ENCODE measurements at regions of chr2 and their contacts with region 1.

Region 1: GRCh38 chr2:85999061-85999831 is 106.4 kb downstream of the POLR1A start:
- DNase-seq: no peak
- ATAC-seq: peak; percentile 73
- H3K4me3 Mint-ChIP-seq: peak overlapping the region; percentile 66
- H3K27ac Mint-ChIP-seq: peak overlapping the region; percentile 96
- H3K4me1 Mint-ChIP-seq: peaks cover 76% of the 10 kb centered on the region
- H3K27me3 Mint-ChIP-seq: no peaks in the 10 kb centered on the region
- CTCF ChIP-seq: no peak

Region 2: DNA sequence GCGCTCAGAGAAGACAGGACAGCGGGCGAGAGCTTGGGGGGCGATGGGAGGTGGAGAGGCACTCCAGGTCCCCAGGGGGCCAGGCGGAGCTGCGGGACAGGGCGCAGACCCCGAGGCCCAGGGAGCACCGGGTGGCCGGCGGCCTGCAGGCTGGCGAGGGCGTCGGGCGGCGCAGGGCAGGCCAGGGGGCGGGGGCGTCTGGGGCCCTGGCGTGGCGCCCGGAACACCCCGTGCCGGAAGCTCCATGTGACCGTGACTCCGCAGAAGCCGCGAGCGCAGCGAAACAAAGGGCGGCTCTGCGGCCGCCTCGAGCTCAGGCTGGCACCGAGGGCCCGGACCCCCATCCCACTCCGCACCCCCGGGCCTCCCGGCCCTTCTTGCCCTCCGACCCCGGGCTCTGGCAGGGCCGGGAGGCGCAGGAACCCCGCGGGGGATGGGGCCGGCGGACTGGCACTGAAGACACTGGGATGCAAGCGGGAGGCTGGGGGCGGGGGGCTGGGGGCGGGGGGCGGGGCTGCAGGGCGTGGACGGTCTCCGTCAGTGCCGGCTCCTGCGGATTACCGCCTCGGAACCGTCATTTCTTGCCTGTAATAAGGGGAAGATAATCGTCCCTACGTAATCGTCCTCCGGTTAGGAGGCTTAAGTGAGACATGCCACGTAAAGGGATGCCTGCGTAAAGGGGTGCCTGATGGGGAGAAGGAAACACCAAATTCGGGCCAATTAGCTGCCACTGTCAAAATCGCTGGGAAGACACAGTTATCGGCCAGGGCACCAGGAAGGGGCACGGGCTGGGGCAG is 561.6 kb before region 1 on chr2:
- CTCF ChIA-PET with region 1: no interaction called
- POLR2A ChIA-PET with region 1: no interaction called
- intact Hi-C with region 1: no loop called
- DNase-seq: peak; percentile 80
- ATAC-seq: peak; percentile 86
- H3K4me3 Mint-ChIP-seq: peak overlapping the region; percentile 87
- H3K27ac Mint-ChIP-seq: peak overlapping the region; percentile 95
- H3K4me1 Mint-ChIP-seq: peaks cover 33% of the 10 kb centered on the region
- H3K27me3 Mint-ChIP-seq: no peaks in the 10 kb centered on the region
- CTCF ChIP-seq: no peak

Region 3: GRCh38 chr2:85852937-85853498 is 146.2 kb before region 1 on chr2:
- CTCF ChIA-PET with region 1: no interaction called
- POLR2A ChIA-PET with region 1: interaction called, 6 read pairs
- intact Hi-C with region 1: loop called (anchors 2 kb)
- DNase-seq: peak; percentile 29
- ATAC-seq: peak; percentile 76
- H3K4me3 Mint-ChIP-seq: peak overlapping the region; percentile 79
- H3K27ac Mint-ChIP-seq: peak overlapping the region; percentile 99
- H3K4me1 Mint-ChIP-seq: peaks cover 79% of the 10 kb centered on the region
- H3K27me3 Mint-ChIP-seq: no peaks in the 10 kb centered on the region
- CTCF ChIP-seq: no peak

Region 4: GRCh38 chr2:85976106-85976920 is 22.9 kb before region 1 on chr2:
- CTCF ChIA-PET with region 1: no interaction called
- POLR2A ChIA-PET with region 1: interaction called, 3 read pairs
- intact Hi-C with region 1: loop called (anchors 2 kb)
- DNase-seq: no peak
- ATAC-seq: no peak
- H3K4me3 Mint-ChIP-seq: no peak overlapping the region
- H3K27ac Mint-ChIP-seq: no peak overlapping the region
- H3K4me1 Mint-ChIP-seq: peaks cover 21% of the 10 kb centered on the region
- H3K27me3 Mint-ChIP-seq: no peaks in the 10 kb centered on the region
- CTCF ChIP-seq: no peak

Region 5: DNA sequence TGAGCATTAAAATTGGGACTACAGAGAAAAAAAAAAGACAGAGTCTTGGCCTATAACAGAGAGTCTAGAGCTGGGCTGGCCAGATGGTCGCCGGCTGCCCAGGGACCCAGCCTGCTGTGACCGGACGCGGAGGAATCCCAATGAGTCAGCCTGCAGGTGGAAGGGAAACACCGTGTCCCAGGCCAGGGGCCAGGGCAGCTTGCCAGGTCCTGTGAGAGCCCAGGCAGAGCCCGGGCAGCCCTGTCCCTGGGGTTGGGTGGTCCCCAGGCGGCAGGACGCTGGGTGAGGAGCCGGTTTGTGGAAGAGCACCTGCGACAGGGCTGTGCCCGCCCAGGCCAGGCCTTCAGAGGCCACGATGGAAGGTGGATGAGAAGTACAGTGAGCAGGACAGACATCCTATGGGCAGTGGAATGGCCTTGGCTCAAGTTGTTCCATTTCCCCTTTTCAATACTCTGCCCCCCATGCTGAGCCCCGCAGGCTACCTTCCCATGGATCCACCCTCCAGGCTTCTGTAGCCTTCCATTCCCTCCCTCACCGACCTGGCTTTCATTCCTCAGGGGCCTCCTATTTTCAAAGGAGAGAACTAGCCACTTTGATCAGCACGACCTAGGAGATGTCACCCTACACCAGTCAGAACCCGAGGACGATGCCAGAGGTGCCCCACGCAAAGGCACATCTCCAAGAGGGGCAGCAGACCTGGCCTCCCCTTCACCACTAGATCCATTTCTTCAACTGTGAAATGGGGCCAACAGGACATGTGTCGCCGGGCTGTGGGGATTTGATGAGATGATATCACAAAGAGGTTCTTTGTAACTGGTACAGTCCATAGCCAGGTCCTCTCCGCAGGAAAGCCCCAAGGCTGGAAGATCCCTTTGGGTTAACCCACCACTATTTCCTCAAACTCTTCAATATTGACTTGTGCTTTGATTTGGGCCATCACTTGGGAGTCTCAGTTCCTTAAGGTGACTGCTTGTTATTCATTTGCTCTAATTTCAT is 19.0 kb after region 1 on chr2:
- CTCF ChIA-PET with region 1: no interaction called
- POLR2A ChIA-PET with region 1: interaction called, 19 read pairs
- intact Hi-C with region 1: loop called (anchors 2 kb)
- DNase-seq: no peak
- ATAC-seq: no peak
- H3K4me3 Mint-ChIP-seq: no peak overlapping the region
- H3K27ac Mint-ChIP-seq: peak overlapping the region; percentile 85
- H3K4me1 Mint-ChIP-seq: peaks cover 67% of the 10 kb centered on the region
- H3K27me3 Mint-ChIP-seq: no peaks in the 10 kb centered on the region
- CTCF ChIP-seq: no peak

Region 6: GRCh38 chr2:86072271-86072858 is 73.1 kb after region 1 on chr2:
- CTCF ChIA-PET with region 1: no interaction called
- POLR2A ChIA-PET with region 1: no interaction called
- intact Hi-C with region 1: loop called (anchors 1 kb)
- DNase-seq: peak; percentile 38
- ATAC-seq: peak; percentile 93
- H3K4me3 Mint-ChIP-seq: peak overlapping the region; percentile 28
- H3K27ac Mint-ChIP-seq: peak overlapping the region; percentile 91
- H3K4me1 Mint-ChIP-seq: peaks cover 34% of the 10 kb centered on the region
- H3K27me3 Mint-ChIP-seq: no peaks in the 10 kb centered on the region
- CTCF ChIP-seq: no peak

Region 7: DNA sequence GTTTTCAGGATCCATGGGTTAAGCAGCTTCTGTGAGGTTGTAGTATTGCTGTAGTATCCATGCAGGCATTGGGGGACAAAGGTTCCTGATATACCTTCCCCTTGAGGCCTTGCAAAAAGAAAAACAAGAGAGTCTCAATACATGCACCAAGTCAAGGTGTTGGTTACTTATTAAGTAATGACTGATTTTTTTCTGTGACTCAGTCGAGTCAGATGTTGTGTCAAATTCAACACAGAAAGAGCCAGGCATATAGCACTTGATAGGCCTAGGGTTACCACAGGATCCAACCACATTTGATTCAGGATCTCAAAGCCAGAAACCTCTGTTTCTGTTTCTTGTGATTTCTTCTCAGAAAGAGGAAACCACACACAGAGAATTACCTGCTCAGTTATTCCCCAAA is 816.4 kb after region 1 on chr2:
- CTCF ChIA-PET with region 1: no interaction called
- POLR2A ChIA-PET with region 1: no interaction called
- intact Hi-C with region 1: no loop called
- DNase-seq: no peak
- ATAC-seq: no peak
- H3K4me3 Mint-ChIP-seq: no peak overlapping the region
- H3K27ac Mint-ChIP-seq: no peak overlapping the region
- H3K4me1 Mint-ChIP-seq: no peaks in the 10 kb centered on the region
- H3K27me3 Mint-ChIP-seq: peaks cover 13% of the 10 kb centered on the region
- CTCF ChIP-seq: no peak